ENCODE measurements at regions of chr20 and their contacts with region 1.

Region 1: GRCh38 chr20:45028424-45029136 is 62.3 kb downstream of the STK4 start:
- DNase-seq: no peak
- H3K4me3 ChIP-seq: no peak overlapping the region
- H3K27ac ChIP-seq: no peak overlapping the region
- H3K4me1 ChIP-seq: peaks cover 10% of the 10 kb centered on the region
- H3K27me3 ChIP-seq: no peaks in the 10 kb centered on the region
- CTCF ChIP-seq: no peak

Region 2: GRCh38 chr20:44946271-44946852 is 82.2 kb before region 1 on chr20:
- CTCF ChIA-PET with region 1: no interaction called
- dilution Hi-C with region 1: loop called (anchors 5 kb)
- in situ Hi-C with region 1: no loop called
- intact Hi-C with region 1: no loop called
- DNase-seq: no peak
- H3K4me3 ChIP-seq: no peak overlapping the region
- H3K27ac ChIP-seq: no peak overlapping the region
- H3K4me1 ChIP-seq: no peaks in the 10 kb centered on the region
- H3K27me3 ChIP-seq: no peaks in the 10 kb centered on the region
- CTCF ChIP-seq: no peak